HepG2 (cell line): ENCODE measurements at regions of chr3 and their contacts with region 1.

Region 1: GRCh38 chr3:146160964-146161662 is at the start of gene PLOD2:
- DNase-seq: peak; percentile 92
- ATAC-seq: peak; percentile 94
- H3K4me3 ChIP-seq: peak within 1 kb of the TSS; percentile 94 to 96 (median 94)
- H3K27ac ChIP-seq: peak within 1 kb of the TSS; percentile 97
- H3K4me1 ChIP-seq: peaks cover 65% of the 10 kb centered on the region
- H3K27me3 ChIP-seq: no peaks in the 10 kb centered on the region; a peak in 1 of 5 replicates
- CTCF ChIP-seq: no peak; the same call in 1 of the 2 replicates
- EP300 ChIP-seq: peak in 1 of 2 experiments; percentile 71; a peak in 1 of 4 replicates
- POLR2A ChIP-seq: peak; percentile 96 to 99
- RAD21 ChIP-seq: no peak; the same call in 1 of the 2 replicates
- total RNA-seq, gene PLOD2: 65.4 and 107 TPM in 2 replicates

Region 2: GRCh38 chr3:145533696-145534095 is 627.4 kb before region 1 on chr3:
- CTCF ChIA-PET with region 1: no interaction called
- POLR2A ChIA-PET with region 1: no interaction called
- in situ Hi-C with region 1: no loop called
- intact Hi-C with region 1: no loop called
- DNase-seq: no peak
- ATAC-seq: no peak
- H3K4me3 ChIP-seq: no peak overlapping the region
- H3K27ac ChIP-seq: no peak overlapping the region
- H3K4me1 ChIP-seq: no peaks in the 10 kb centered on the region
- H3K27me3 ChIP-seq: no peaks in the 10 kb centered on the region
- CTCF ChIP-seq: no peak
- EP300 ChIP-seq: no peak
- POLR2A ChIP-seq: no peak
- RAD21 ChIP-seq: no peak

Region 3: GRCh38 chr3:146065573-146066006 is 95.5 kb before region 1 on chr3:
- CTCF ChIA-PET with region 1: interaction called, 7 read pairs
- POLR2A ChIA-PET with region 1: interaction called, 16 read pairs
- in situ Hi-C with region 1: loop called (anchors 10 kb)
- intact Hi-C with region 1: loop called (anchors 1 kb)
- DNase-seq: peak; percentile 50
- ATAC-seq: no peak
- H3K4me3 ChIP-seq: no peak overlapping the region
- H3K27ac ChIP-seq: no peak overlapping the region
- H3K4me1 ChIP-seq: no peaks in the 10 kb centered on the region
- H3K27me3 ChIP-seq: no peaks in the 10 kb centered on the region; a peak in 1 of 5 replicates
- CTCF ChIP-seq: peak; percentile 49
- EP300 ChIP-seq: no peak
- POLR2A ChIP-seq: no peak
- RAD21 ChIP-seq: no peak

Region 4: GRCh38 chr3:146110161-146110560 is 51.0 kb before region 1 on chr3:
- CTCF ChIA-PET with region 1: no interaction called
- POLR2A ChIA-PET with region 1: interaction called, 4 read pairs
- in situ Hi-C with region 1: no loop called
- intact Hi-C with region 1: loop called (anchors 1 kb)
- DNase-seq: peak; percentile 35
- ATAC-seq: no peak
- H3K4me3 ChIP-seq: no peak overlapping the region
- H3K27ac ChIP-seq: no peak overlapping the region
- H3K4me1 ChIP-seq: peaks cover 52% of the 10 kb centered on the region
- H3K27me3 ChIP-seq: no peaks in the 10 kb centered on the region
- CTCF ChIP-seq: no peak
- EP300 ChIP-seq: no peak
- POLR2A ChIP-seq: no peak
- RAD21 ChIP-seq: no peak

Region 5: GRCh38 chr3:146125951-146126350 is 35.2 kb before region 1 on chr3:
- CTCF ChIA-PET with region 1: no interaction called
- POLR2A ChIA-PET with region 1: interaction called, 9 read pairs
- in situ Hi-C with region 1: no loop called
- intact Hi-C with region 1: loop called (anchors 5 kb)
- DNase-seq: peak; percentile 56
- ATAC-seq: peak; percentile 58; the same call in 2 of the 3 replicates
- H3K4me3 ChIP-seq: no peak overlapping the region
- H3K27ac ChIP-seq: no peak overlapping the region
- H3K4me1 ChIP-seq: peaks cover 48% of the 10 kb centered on the region
- H3K27me3 ChIP-seq: no peaks in the 10 kb centered on the region
- CTCF ChIP-seq: no peak
- EP300 ChIP-seq: 0 out of 4 replicates have a peak, but pooled peaks of 1 of the 2 experiments have one; percentile 29
- POLR2A ChIP-seq: no peak
- RAD21 ChIP-seq: no peak

Region 6: GRCh38 chr3:146218880-146219866 is 58.1 kb after region 1 on chr3:
- CTCF ChIA-PET with region 1: no interaction called
- POLR2A ChIA-PET with region 1: interaction called, 13 read pairs
- in situ Hi-C with region 1: no loop called
- intact Hi-C with region 1: no loop called
- DNase-seq: peak; percentile 6
- ATAC-seq: no peak
- H3K4me3 ChIP-seq: no peak overlapping the region; a peak in 2 of 6 replicates
- H3K27ac ChIP-seq: no peak overlapping the region
- H3K4me1 ChIP-seq: peaks cover 45% of the 10 kb centered on the region
- H3K27me3 ChIP-seq: no peaks in the 10 kb centered on the region
- CTCF ChIP-seq: peak; percentile 54
- EP300 ChIP-seq: no peak
- POLR2A ChIP-seq: no peak
- RAD21 ChIP-seq: no peak; the same call in 1 of the 2 replicates